ENCODE measurements at regions of chr3 and their contacts with region 1.

Region 1: GRCh38 chr3:67113802-67114407 is 115.8 kb downstream of the KBTBD8 start:
- DNase-seq: peak; percentile 56 to 95 (median 79)

Region 2: DNA sequence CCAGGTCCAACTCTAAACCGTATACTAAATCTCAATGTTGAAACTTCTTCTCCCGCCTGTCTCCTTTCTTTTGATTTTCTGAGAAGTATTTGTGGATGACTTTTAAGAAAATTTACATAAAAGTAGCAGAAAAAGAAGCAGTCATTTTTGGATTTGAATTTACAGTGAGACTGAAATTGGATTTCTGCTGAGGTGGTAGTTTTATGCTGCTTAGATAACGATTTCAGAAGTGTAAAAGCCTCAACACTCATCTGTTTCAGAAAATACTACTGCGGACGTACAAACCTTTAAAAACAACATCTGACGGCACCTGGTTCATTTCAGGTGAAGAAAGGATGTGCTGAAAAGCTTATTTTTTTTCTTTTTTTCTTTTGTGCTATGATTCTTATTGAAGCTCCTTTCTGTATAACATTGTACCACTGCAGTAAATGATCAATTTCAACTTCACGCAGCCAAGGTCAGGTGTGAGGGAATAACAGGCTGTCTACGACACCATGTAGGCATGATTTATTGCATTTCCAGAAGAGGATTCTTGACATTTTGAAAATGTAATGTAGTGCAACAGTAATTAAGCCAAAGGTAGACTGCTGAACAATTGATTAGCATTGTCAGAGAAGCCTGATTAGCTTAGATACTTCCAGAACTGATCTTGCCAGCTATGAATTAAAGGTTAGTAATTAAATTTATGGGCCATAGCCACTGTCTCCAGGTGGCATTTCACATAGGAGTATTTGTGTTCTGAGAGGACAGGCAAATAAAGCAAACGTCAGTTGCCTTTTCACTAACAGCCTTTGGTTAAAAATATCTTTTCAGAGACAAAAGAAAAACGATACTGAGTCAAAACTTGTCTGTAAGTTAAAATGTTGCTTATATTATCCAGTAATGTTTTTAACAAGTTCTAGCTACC is 250.4 kb before region 1 on chr3:
- intact Hi-C with region 1: no loop called
- DNase-seq: no peak

Region 3: GRCh38 chr3:68972358-68972979 is 1858.6 kb after region 1 on chr3:
- intact Hi-C with region 1: loop called (anchors 5 kb)
- DNase-seq: peak; percentile 45 to 95 (median 77)

Measured in posterior cingulate gyrus (tissue), 11 donors.